Vagina (tissue), 2 donors: ENCODE measurements at regions of chr11 and their contacts with region 1.

Region 1: GRCh38 chr11:61947486-61948210 is 2.5 kb upstream of the BEST1 start:
- DNase-seq: no peak
- H3K4me3 ChIP-seq: no peak overlapping the region
- H3K27ac ChIP-seq: peak overlapping the region; percentile 47
- H3K4me1 ChIP-seq: peaks cover 18% of the 10 kb centered on the region
- H3K27me3 ChIP-seq: no peaks in the 10 kb centered on the region
- CTCF ChIP-seq: peak; percentile 74 to 93 (median 85)
- POLR2A ChIP-seq: no peak

Region 2: DNA sequence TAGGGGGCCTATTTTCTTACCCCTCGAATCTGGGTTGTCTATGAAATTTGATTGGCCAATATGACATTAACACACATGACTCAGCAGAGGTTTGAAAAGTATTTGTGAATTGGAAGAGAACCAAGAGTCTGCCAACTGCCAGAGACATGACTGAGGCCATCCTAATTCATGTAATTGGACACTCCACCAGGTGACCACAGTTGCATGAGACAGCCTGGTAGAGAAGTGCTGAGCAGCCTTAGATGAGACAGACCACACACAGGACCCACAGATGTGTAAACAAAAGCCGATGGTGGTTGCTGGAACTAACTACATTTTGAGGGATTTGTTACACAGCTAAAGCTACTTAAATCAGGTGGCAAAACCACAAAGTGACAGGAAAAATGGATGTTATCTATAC is 1519.1 kb before region 1 on chr11:
- intact Hi-C with region 1: no loop called
- DNase-seq: no peak
- H3K4me3 ChIP-seq: no peak overlapping the region
- H3K27ac ChIP-seq: no peak overlapping the region
- H3K4me1 ChIP-seq: no peaks in the 10 kb centered on the region
- H3K27me3 ChIP-seq: no peaks in the 10 kb centered on the region
- CTCF ChIP-seq: no peak
- POLR2A ChIP-seq: no peak

Region 3: GRCh38 chr11:61792310-61793085 is 155.2 kb before region 1 on chr11 and contains the starts of genes FEN1 and TMEM258:
- intact Hi-C with region 1: loop called (anchors 5 kb)
- DNase-seq: peak in 1 of 2 donors; percentile 96
- H3K4me3 ChIP-seq: peak within 1 kb of the TSS; percentile 79 to 84
- H3K27ac ChIP-seq: peak within 1 kb of the TSS; percentile 96
- H3K4me1 ChIP-seq: peaks cover 37% of the 10 kb centered on the region
- H3K27me3 ChIP-seq: no peaks in the 10 kb centered on the region
- CTCF ChIP-seq: no peak
- POLR2A ChIP-seq: peak in 1 of 2 donors; percentile 52
- total RNA-seq, gene FEN1: 9.6 TPM
- total RNA-seq, gene TMEM258: 47.9 TPM

Region 4: DNA sequence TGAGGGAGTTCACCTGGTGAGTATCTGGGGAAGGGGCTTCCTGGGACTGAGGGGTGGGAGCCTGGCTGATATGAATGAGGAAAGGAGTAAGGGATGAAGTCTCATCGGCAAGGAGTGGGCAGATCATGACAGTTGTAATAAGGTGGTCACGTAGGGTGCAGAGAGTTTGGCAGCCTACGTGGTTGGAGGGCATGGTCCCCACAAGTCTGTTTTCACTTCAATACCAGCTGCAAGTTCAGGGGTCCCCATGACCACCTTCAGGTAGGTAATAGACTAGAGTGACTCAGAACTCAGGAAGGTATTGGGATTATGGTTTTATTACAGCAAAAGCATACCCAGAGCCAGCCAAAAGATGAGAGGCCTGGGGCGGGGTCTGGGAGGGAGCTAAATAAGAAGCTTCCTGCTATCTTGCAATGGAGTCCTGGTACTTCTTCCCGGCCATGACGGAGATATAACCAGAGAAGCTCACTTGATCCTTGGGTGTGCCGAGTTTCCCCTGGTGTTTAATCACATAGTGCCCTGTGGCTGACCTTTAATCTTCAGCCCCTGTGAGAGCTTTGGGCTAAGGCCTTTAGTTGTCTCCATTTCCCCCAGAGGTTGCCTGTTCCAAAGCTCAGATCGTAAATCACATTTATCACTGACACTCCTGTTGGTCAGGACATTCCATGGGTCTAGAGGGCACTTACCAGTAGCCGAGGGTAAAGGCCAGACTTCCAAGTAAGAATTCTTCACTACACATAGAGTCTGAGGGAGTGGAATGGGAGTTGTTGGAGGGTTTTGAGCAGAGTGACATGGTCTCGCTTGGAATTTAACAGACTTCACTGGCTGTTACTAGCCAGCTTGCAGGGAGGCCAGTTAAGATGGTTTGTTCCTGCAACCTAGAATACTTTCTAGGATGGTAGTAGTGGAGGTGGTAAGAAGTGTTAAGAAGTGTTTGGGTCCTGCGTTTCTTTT is 942.1 kb after region 1 on chr11:
- intact Hi-C with region 1: no loop called
- DNase-seq: no peak
- H3K4me3 ChIP-seq: no peak overlapping the region
- H3K27ac ChIP-seq: no peak overlapping the region
- H3K4me1 ChIP-seq: peaks cover 43% of the 10 kb centered on the region
- H3K27me3 ChIP-seq: no peaks in the 10 kb centered on the region
- CTCF ChIP-seq: no peak
- POLR2A ChIP-seq: no peak